Activated T-helper 2 cell treated with anti-CD3 and anti-CD28 coated beads, Interferon-gamma antibody, Interleukin-2, Interleukin-4, amounts not matched to agents 10 μg/mL and 5 μg/mL and 100 μg/mL, durations not matched to agents 14 hours and 24 hours and 36 hours (primary cell): ENCODE measurements at regions of chr14 and their contacts with region 1.

Region 1: GRCh38 chr14:31084385-31084784 is 58.2 kb upstream of the STRN3 start:
- DNase-seq: no peak
- H3K4me3 Mint-ChIP-seq: no peak overlapping the region
- H3K27ac Mint-ChIP-seq: no peak overlapping the region
- H3K4me1 Mint-ChIP-seq: no peaks in the 10 kb centered on the region
- H3K27me3 Mint-ChIP-seq: no peaks in the 10 kb centered on the region

Region 2: GRCh38 chr14:30982533-30982932 is 101.9 kb before region 1 on chr14:
- intact Hi-C with region 1: loop called (anchors 1 kb)
- DNase-seq: no peak
- H3K4me3 Mint-ChIP-seq: no peak overlapping the region
- H3K27ac Mint-ChIP-seq: no peak overlapping the region
- H3K4me1 Mint-ChIP-seq: peaks cover 1% of the 10 kb centered on the region
- H3K27me3 Mint-ChIP-seq: no peaks in the 10 kb centered on the region

Region 3: GRCh38 chr14:31430634-31431264 is 346.4 kb after region 1 on chr14:
- intact Hi-C with region 1: no loop called
- DNase-seq: no peak
- H3K4me3 Mint-ChIP-seq: no peak overlapping the region
- H3K27ac Mint-ChIP-seq: peak overlapping the region; percentile 31
- H3K4me1 Mint-ChIP-seq: peaks cover 10% of the 10 kb centered on the region
- H3K27me3 Mint-ChIP-seq: no peaks in the 10 kb centered on the region